ENCODE measurements at regions of chr15 and their contacts with region 1.

Region 1: GRCh38 chr15:78909791-78910228 is 35.0 kb downstream of the CTSH start:
- DNase-seq: no peak
- ATAC-seq: peak; percentile 53
- H3K4me3 ChIP-seq: no peak overlapping the region
- H3K27ac ChIP-seq: no peak overlapping the region
- H3K4me1 ChIP-seq: peaks cover 0 to 5% of the 10 kb centered on the region in 2 donors
- H3K27me3 ChIP-seq: no peaks in the 10 kb centered on the region

Region 2: GRCh38 chr15:78979456-78980320 is 69.9 kb after region 1 on chr15:
- intact Hi-C with region 1: loop called (anchors 5 kb)
- DNase-seq: peak in 1 of 2 donors; percentile 74
- ATAC-seq: peak; percentile 52
- H3K4me3 ChIP-seq: no peak overlapping the region
- H3K27ac ChIP-seq: no peak overlapping the region
- H3K4me1 ChIP-seq: no peaks in the 10 kb centered on the region
- H3K27me3 ChIP-seq: no peaks in the 10 kb centered on the region

Region 3: GRCh38 chr15:79431636-79432344 is 522.0 kb after region 1 on chr15 and contains the start of gene MINAR1:
- intact Hi-C with region 1: no loop called
- DNase-seq: peak; percentile 48 to 81
- ATAC-seq: peak; percentile 75
- H3K4me3 ChIP-seq: peak within 1 kb of the TSS; percentile 53
- H3K27ac ChIP-seq: no peak within 1 kb of the TSS
- H3K4me1 ChIP-seq: no peaks in the 10 kb centered on the region
- H3K27me3 ChIP-seq: no peaks in the 10 kb centered on the region
- total RNA-seq, gene MINAR1: 0.91 to 1.4 TPM

Measured in aorta (tissue), 5 donors.